GM12878 (cell line): ENCODE measurements at regions of chr13 and their contacts with region 1.

Region 1: DNA sequence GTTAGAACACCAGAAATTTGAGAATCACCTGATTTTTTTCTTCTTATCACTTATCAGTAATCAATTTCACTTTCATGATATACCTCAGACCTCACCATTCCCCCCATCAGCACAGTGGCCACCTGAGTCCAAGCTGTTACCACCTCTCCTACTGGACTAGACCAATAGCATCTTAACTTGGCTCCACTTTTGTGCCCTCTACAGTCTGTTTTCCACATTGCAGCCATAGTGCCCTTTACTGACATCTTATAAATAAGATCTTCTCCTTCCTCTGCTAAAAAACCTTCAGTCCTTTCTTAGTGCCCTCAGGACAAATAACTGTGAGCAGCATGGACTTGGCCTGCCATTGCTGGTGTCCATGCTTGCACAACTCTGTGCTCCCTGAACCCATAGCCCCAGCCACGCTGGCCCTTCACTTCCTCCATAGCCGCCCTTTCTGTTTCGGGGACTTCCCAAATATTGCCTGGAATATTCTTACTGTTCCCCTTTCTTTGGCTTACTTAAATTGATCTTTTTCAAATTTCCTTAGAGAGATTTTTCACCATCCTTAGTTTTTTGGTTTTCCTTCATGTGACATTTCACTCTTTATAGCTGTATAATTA is 380.8 kb downstream of the LMO7 start:
- DNase-seq: no peak
- ATAC-seq: peak; percentile 90
- H3K4me3 ChIP-seq: no peak overlapping the region
- H3K27ac ChIP-seq: no peak overlapping the region
- H3K4me1 ChIP-seq: no peaks in the 10 kb centered on the region
- H3K27me3 ChIP-seq: no peaks in the 10 kb centered on the region
- CTCF ChIP-seq: peak; percentile 57 to 72 (median 60); a peak in 5 of 6 replicates
- EP300 ChIP-seq: no peak
- POLR2A ChIP-seq: no peak
- RAD21 ChIP-seq: peak; percentile 69

Region 2: DNA sequence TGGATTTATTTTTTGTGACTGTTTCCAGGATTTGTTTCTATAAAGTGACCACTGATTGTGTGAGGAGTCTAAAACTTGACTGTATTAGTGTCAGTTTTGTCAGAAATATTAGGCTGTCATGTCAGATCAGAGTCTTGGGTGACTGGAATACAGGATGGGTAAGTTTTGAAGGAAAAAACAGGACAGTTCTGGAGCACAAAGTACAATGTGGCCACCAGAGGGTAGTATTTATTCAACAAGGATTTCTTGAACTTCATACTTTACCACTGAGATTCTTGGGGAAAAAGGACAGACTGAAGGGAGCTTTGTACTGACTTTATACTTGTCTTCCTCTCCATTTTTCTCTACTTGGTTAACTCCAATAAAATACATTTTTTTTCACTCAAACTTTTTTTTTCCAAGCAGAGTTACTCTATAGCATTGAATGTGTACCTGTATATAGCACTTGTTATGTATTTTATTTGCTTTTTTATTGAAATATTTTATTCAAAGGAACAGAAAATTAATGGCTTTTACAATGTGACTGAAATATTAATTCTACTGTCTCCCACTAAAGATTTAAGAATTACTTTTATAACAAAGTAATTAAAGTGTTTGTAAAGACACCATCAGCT is 329.6 kb before region 1 on chr13:
- CTCF ChIA-PET with region 1: interaction called, 11 read pairs
- POLR2A ChIA-PET with region 1: no interaction called
- RAD21 ChIA-PET with region 1: no interaction called
- SMC1A ChIA-PET with region 1: no interaction called
- in situ Hi-C with region 1: loop called (anchors 5 kb)
- intact Hi-C with region 1: no loop called
- DNase-seq: no peak
- ATAC-seq: peak; percentile 60
- H3K4me3 ChIP-seq: no peak overlapping the region
- H3K27ac ChIP-seq: no peak overlapping the region
- H3K4me1 ChIP-seq: no peaks in the 10 kb centered on the region
- H3K27me3 ChIP-seq: no peaks in the 10 kb centered on the region
- CTCF ChIP-seq: peak; percentile 23 to 39 (median 38); a peak in 5 of 6 replicates
- EP300 ChIP-seq: no peak
- POLR2A ChIP-seq: no peak
- RAD21 ChIP-seq: peak; percentile 47

Region 3: GRCh38 chr13:76473552-76474134 is 456.7 kb after region 1 on chr13:
- CTCF ChIA-PET with region 1: interaction called, 3 read pairs
- POLR2A ChIA-PET with region 1: no interaction called
- RAD21 ChIA-PET with region 1: no interaction called
- SMC1A ChIA-PET with region 1: interaction called, 5 read pairs
- in situ Hi-C with region 1: no loop called
- intact Hi-C with region 1: loop called (anchors 5 kb)
- DNase-seq: peak; percentile 25
- ATAC-seq: peak; percentile 100
- H3K4me3 ChIP-seq: no peak overlapping the region
- H3K27ac ChIP-seq: no peak overlapping the region
- H3K4me1 ChIP-seq: no peaks in the 10 kb centered on the region
- H3K27me3 ChIP-seq: no peaks in the 10 kb centered on the region
- CTCF ChIP-seq: peak; percentile 68 to 85 (median 84)
- EP300 ChIP-seq: no peak
- POLR2A ChIP-seq: no peak
- RAD21 ChIP-seq: peak; percentile 96

Region 4: GRCh38 chr13:76586842-76587241 is 569.9 kb after region 1 on chr13:
- CTCF ChIA-PET with region 1: no interaction called
- POLR2A ChIA-PET with region 1: no interaction called
- RAD21 ChIA-PET with region 1: no interaction called
- SMC1A ChIA-PET with region 1: no interaction called
- in situ Hi-C with region 1: no loop called
- intact Hi-C with region 1: no loop called
- DNase-seq: no peak
- ATAC-seq: no peak
- H3K4me3 ChIP-seq: no peak overlapping the region
- H3K27ac ChIP-seq: no peak overlapping the region
- H3K4me1 ChIP-seq: no peaks in the 10 kb centered on the region
- H3K27me3 ChIP-seq: no peaks in the 10 kb centered on the region
- CTCF ChIP-seq: no peak
- EP300 ChIP-seq: no peak
- POLR2A ChIP-seq: no peak
- RAD21 ChIP-seq: no peak